ENCODE measurements at regions of chr14 and their contacts with region 1.

Region 1: GRCh38 chr14:34496679-34497513 is 34.9 kb upstream of the SPTSSA start:
- DNase-seq: peak; percentile 81 to 88
- ATAC-seq: peak; percentile 99
- H3K4me3 ChIP-seq: peak overlapping the region in 3 of 4 donors; percentile 15 to 29 (median 18)
- H3K27ac ChIP-seq: peak overlapping the region; percentile 72 to 87 (median 84)
- H3K4me1 ChIP-seq: peaks cover 15 to 18% of the 10 kb centered on the region in 2 donors
- H3K27me3 ChIP-seq: no peaks in the 10 kb centered on the region
- CTCF ChIP-seq: peak in 1 of 5 experiments; percentile 32
- POLR2A ChIP-seq: peak; percentile 21 to 55

Region 2: DNA sequence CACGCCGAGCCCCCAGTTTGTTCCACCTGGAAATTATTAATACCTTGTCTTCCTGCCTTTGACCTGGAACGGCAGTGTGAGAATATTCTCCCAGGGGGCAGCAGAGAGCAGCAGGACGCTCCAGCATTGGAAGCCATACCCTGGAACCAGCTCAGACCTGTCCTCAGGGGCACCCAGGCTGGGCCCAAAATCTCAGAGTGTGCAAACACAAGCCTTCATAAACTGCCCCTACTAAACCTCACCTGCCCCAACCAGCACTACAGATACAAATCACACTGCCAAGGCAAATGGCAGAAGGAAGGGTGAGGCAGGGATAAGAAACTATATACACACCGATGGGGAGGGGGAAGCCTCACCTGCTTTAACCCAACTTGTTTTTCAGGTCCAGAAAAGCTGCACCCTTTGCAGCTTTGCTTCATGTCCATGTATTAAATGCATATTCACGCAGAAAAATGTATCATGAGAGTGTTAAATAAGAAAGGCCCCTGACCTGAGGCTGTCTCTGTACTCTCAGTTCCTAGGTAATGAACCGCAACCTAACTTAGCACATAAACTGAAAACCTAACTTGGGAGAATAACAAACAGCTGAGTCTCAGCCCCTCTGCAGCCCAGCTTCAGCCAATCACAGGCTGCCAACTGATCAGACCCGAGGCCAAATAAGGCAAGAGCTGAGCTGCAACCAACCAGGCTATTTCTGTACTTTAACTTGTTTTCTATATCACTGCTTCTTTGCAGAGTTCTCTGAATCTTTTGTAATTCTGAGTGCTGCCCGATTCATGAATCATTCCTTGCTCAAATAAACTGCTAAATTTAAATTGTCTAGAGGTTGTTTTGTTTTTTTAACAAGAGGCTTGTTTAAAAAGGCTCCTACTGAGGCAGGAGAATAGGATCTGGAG is 164.9 kb before region 1 on chr14:
- in situ Hi-C with region 1: loop called (anchors 10 to 25 kb)
- intact Hi-C with region 1: loop called (anchors 1 kb)
- DNase-seq: peak; percentile 20 to 42
- ATAC-seq: peak; percentile 58 to 87
- H3K4me3 ChIP-seq: no peak overlapping the region
- H3K27ac ChIP-seq: no peak overlapping the region
- H3K4me1 ChIP-seq: peaks cover 0 to 5% of the 10 kb centered on the region in 2 donors
- H3K27me3 ChIP-seq: no peaks in the 10 kb centered on the region
- CTCF ChIP-seq: peak; percentile 67 to 87 (median 73)
- POLR2A ChIP-seq: no peak

Region 3: DNA sequence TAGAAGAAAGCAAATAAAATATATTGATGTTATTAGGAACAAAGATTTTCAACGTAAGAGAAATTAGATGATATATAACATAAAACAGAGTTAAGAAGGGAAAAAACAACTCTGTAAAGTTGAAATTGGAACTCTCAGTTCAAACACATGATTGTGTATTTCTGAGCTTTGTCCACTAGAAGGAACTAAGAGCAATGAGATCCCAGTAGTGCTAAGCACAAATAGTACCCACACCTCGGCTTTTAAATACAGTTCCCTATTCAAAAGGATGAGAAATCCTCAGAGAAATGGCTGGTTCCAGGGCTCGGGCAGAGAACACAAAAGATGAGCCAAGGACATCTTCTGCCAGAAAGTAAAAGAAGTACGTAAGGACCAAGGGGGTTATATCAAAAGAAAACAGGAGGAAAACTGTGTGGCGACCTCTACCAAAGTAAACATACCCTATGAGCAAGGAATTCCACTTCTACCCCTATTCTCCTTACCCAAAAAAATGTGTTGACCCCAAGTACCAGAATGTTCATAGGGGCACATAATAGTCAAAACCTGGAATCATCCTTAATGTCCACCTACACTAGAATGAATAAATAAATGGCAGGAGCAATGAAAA is 131.5 kb before region 1 on chr14:
- in situ Hi-C with region 1: no loop called
- intact Hi-C with region 1: loop called (anchors 1 kb)
- DNase-seq: no peak
- ATAC-seq: no peak
- H3K4me3 ChIP-seq: no peak overlapping the region
- H3K27ac ChIP-seq: no peak overlapping the region
- H3K4me1 ChIP-seq: no peaks in the 10 kb centered on the region
- H3K27me3 ChIP-seq: no peaks in the 10 kb centered on the region
- CTCF ChIP-seq: peak in 2 of 5 experiments; percentile 21 to 32
- POLR2A ChIP-seq: no peak

Region 4: GRCh38 chr14:34461334-34462131 is 35.4 kb before region 1 on chr14:
- in situ Hi-C with region 1: no loop called
- intact Hi-C with region 1: loop called (anchors 1 kb)
- DNase-seq: peak; percentile 37 to 66
- ATAC-seq: peak; percentile 73 to 78
- H3K4me3 ChIP-seq: peak overlapping the region; percentile 53 to 73 (median 62)
- H3K27ac ChIP-seq: peak overlapping the region; percentile 89 to 91 (median 90)
- H3K4me1 ChIP-seq: peaks cover 12 to 21% of the 10 kb centered on the region in 2 donors
- H3K27me3 ChIP-seq: no peaks in the 10 kb centered on the region
- CTCF ChIP-seq: no peak
- POLR2A ChIP-seq: no peak

Region 5: GRCh38 chr14:34539407-34540180 is 42.7 kb after region 1 on chr14 and contains the start of gene EAPP:
- in situ Hi-C with region 1: no loop called
- intact Hi-C with region 1: loop called (anchors 5 kb)
- DNase-seq: peak; percentile 99
- ATAC-seq: peak; percentile 96 to 98
- H3K4me3 ChIP-seq: peak within 1 kb of the TSS; percentile 74 to 98 (median 96)
- H3K27ac ChIP-seq: peak within 1 kb of the TSS; percentile 92 to 98 (median 97)
- H3K4me1 ChIP-seq: peaks cover 18 to 19% of the 10 kb centered on the region in 2 donors
- H3K27me3 ChIP-seq: no peaks in the 10 kb centered on the region
- CTCF ChIP-seq: peak in 2 of 5 experiments; percentile 26 to 28
- POLR2A ChIP-seq: peak; percentile 90 to 96
- total RNA-seq, gene EAPP: 25.6 to 35.7 (median 28.0) TPM

Region 6: DNA sequence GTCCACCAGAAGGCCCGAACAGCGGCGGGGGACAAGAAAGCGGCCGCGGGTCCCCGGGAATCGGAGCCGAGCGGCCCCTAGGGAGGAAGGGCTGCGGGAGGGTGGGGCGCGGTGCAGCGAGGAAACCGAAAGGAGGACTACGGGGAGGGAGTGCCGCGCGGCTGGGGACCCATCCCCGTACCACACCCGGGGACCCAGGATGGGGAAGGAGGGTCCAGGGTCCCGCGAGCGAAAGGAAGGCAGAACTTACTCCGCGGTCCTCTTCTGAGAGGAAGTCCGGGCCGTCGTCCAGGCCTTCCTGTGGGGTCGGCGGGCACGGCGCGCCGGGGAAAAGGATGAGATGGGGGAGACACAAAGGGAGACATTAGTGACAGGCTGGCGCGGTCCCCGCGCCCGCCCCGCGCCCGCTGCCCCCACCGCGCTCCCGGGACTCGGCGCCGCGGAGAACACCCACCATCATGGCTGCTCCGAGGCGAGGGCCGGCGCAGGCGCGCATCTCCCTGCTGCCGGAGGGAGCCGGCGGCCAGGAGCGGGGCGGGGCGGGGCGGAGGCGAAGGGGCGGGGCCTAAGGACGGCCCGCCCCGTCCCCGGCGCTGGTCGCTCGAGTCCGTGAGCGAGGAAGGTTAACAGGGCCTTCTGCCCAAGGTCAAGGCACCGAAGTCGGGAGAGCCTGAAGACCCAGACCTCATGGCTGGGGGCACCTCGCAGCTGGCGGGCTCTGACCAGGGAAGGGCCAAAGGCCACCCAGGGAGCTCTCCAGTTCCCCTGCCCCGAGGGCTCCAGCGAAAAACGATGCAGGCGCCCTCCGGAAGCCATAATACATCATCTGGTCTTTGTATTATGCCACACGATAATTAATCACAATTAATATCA is 133.0 kb after region 1 on chr14 and contains the start of gene SNX6:
- in situ Hi-C with region 1: no loop called
- intact Hi-C with region 1: no loop called
- DNase-seq: peak; percentile 66 to 79
- ATAC-seq: peak; percentile 96 to 98
- H3K4me3 ChIP-seq: peak within 1 kb of the TSS; percentile 93 to 99 (median 96)
- H3K27ac ChIP-seq: peak within 1 kb of the TSS; percentile 95 to 98 (median 98)
- H3K4me1 ChIP-seq: peaks cover 18 to 19% of the 10 kb centered on the region in 2 donors
- H3K27me3 ChIP-seq: no peaks in the 10 kb centered on the region
- CTCF ChIP-seq: no peak
- POLR2A ChIP-seq: peak; percentile 68 to 74
- total RNA-seq, gene SNX6: 73.8 to 113 (median 109) TPM